ENCODE measurements at regions of chr4 and their contacts with region 1.

Region 1: DNA sequence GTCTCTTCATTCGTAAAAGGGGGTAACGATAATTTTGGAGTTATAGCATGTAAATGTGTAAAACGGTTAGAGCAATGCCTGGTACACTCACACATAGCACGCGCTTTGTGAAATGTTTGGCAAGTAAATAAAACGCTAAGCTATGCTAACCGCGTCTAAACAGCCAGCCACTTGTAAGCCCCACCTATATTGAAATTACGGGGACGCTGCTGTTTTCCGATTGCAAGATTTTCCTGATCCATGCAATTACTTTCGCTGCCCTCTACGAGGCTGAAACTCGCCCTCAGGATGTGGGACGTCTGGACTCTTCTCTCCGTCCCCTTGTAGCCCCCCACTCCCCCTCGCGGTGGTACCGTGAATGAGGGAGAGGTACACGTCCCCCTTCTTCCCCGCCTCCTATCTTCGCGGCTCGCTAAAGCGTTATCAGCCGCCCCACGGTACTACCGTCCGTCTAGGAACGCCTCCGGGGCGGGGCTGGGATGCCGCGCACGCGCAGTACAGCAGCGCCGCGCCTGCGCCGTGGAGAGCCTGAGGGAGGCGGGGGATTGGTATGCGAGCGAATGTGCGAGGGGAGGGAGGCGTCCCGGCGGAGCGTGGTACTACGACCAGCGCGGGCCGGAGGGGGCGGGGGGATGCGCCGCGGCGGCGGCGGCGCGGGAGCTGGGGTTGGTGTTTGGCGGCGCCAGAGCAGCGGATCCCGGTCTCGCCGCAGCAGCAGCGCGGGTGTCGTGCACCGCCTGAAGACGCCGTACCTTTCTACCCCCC is at the start of gene STIM2:
- DNase-seq: peak; percentile 97
- H3K4me3 Mint-ChIP-seq: peak within 1 kb of the TSS; percentile 94
- H3K27ac Mint-ChIP-seq: peak within 1 kb of the TSS; percentile 96
- H3K4me1 Mint-ChIP-seq: peaks cover 41% of the 10 kb centered on the region
- H3K27me3 Mint-ChIP-seq: no peaks in the 10 kb centered on the region
- total RNA-seq, gene STIM2: 40.5 to 43.1 TPM

Region 2: GRCh38 chr4:25913851-25914669 is 946.3 kb before region 1 on chr4 and contains the start of gene SMIM20:
- CTCF ChIA-PET with region 1: no interaction called
- intact Hi-C with region 1: loop called (anchors 1 kb)
- DNase-seq: peak; percentile 89
- H3K4me3 Mint-ChIP-seq: peak within 1 kb of the TSS; percentile 96
- H3K27ac Mint-ChIP-seq: peak within 1 kb of the TSS; percentile 97
- H3K4me1 Mint-ChIP-seq: peaks cover 17% of the 10 kb centered on the region
- H3K27me3 Mint-ChIP-seq: no peaks in the 10 kb centered on the region
- total RNA-seq, gene SMIM20: 28.1 to 33.2 TPM

Region 3: DNA sequence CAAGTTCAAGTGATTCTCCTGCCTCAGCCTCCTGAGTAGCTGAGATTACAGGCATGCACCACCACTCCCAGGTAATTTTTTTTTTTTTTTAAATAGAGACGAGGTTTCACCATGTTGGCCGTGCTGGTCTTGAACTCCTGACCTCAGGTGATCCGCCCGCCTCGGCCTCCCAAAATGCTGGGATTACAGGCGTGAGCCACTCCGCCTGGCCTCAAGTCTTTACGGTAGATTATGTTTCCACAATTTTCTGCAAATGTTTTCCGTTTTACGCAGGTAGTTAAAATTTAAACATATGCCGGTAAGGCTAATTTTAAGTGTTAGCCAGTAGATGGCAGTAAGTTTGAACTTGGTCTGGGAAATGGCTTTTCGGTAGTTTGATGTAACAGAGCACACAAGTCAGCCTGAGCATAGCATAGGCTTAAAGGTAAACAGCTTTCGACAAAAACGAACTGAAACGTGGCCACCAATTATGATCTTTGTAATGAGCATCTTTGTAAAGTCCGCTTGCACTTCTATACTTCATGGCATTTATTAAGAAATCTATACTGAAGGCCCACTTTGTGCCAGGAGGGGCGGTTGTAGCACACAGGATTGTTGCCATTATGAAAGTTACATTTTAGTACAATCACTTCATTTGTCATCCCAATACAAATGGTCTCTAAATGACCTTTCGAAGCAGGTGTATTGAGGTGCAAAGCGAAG is 401.1 kb before region 1 on chr4:
- CTCF ChIA-PET with region 1: no interaction called
- intact Hi-C with region 1: loop called (anchors 2 kb)
- DNase-seq: peak; percentile 8
- H3K4me3 Mint-ChIP-seq: peak overlapping the region; percentile 65
- H3K27ac Mint-ChIP-seq: no peak overlapping the region
- H3K4me1 Mint-ChIP-seq: peaks cover 19% of the 10 kb centered on the region
- H3K27me3 Mint-ChIP-seq: no peaks in the 10 kb centered on the region

Region 4: DNA sequence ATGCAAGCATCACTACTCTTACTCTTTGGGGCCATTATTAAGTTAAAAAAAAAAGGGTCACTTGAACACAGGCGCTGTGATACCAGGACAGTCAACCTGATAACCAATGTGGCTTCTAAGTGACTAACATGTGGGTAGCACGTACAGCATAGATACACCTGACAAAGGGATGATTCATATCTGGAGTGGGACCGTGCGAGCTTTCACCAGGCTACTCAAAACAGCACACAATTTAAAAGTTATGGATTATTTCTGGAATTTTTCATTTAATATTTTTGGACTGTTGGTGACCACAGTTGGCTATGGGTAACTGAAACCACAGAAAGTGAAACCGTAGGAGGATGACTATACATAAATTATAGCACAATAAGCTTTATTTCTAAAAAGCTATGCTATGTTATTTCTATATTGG is 113.5 kb before region 1 on chr4:
- CTCF ChIA-PET with region 1: no interaction called
- intact Hi-C with region 1: loop called (anchors 2 kb)
- DNase-seq: peak; percentile 68
- H3K4me3 Mint-ChIP-seq: no peak overlapping the region
- H3K27ac Mint-ChIP-seq: no peak overlapping the region
- H3K4me1 Mint-ChIP-seq: peaks cover 7% of the 10 kb centered on the region
- H3K27me3 Mint-ChIP-seq: no peaks in the 10 kb centered on the region

Region 5: GRCh38 chr4:26873391-26874026 is 13.2 kb after region 1 on chr4:
- CTCF ChIA-PET with region 1: interaction called, 3 read pairs
- intact Hi-C with region 1: loop called (anchors 1 kb)
- DNase-seq: peak; percentile 89
- H3K4me3 Mint-ChIP-seq: no peak overlapping the region
- H3K27ac Mint-ChIP-seq: peak overlapping the region; percentile 69
- H3K4me1 Mint-ChIP-seq: peaks cover 80% of the 10 kb centered on the region
- H3K27me3 Mint-ChIP-seq: no peaks in the 10 kb centered on the region

Region 6: GRCh38 chr4:26907731-26908599 is 47.6 kb after region 1 on chr4:
- CTCF ChIA-PET with region 1: interaction called, 3 read pairs
- intact Hi-C with region 1: loop called (anchors 1 kb)
- DNase-seq: peak; percentile 23
- H3K4me3 Mint-ChIP-seq: peak overlapping the region; percentile 8
- H3K27ac Mint-ChIP-seq: peak overlapping the region; percentile 74
- H3K4me1 Mint-ChIP-seq: peaks cover 73% of the 10 kb centered on the region
- H3K27me3 Mint-ChIP-seq: no peaks in the 10 kb centered on the region